HCT116 (cell line): ENCODE measurements at regions of chr3 and their contacts with region 1.

Region 1: DNA sequence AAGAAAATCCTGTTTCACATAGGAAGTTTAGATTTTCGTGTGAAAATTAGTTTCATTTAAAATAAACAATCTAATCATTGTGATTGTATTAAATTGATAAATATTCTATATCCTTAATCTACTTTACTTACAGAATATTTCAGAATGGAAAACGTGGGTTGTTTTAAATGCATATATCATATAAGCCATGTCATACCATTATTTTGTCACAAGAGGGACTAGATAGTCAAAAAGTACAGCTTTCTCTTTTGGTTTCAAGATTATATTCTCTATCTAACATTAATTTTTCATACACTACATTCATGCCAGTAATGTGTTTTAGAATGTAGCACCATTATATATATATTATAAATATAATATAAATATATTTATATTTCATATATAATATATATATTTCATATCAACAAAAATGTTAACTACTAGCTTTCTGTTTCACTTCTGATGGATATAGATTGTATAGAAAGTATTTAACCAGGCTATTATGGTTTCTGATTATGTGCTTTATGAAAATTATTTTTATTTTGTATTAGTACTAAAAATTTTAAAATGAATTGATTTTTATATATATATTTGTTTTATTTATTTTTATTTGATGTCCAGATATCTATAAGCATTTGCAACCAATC is 45.3 kb downstream of the OSTN start:
- DNase-seq: no peak
- ATAC-seq: no peak
- H3K4me3 ChIP-seq: no peak overlapping the region
- H3K27ac ChIP-seq: no peak overlapping the region
- H3K4me1 ChIP-seq: peaks cover 7 to 20% of the 10 kb centered on the region in 2 experiments
- H3K27me3 ChIP-seq: no peaks in the 10 kb centered on the region
- CTCF ChIP-seq: peak; percentile 25 to 45 (median 26); a peak in 4 of 6 replicates
- POLR2A ChIP-seq: no peak
- RAD21 ChIP-seq: peak; percentile 60

Region 2: DNA sequence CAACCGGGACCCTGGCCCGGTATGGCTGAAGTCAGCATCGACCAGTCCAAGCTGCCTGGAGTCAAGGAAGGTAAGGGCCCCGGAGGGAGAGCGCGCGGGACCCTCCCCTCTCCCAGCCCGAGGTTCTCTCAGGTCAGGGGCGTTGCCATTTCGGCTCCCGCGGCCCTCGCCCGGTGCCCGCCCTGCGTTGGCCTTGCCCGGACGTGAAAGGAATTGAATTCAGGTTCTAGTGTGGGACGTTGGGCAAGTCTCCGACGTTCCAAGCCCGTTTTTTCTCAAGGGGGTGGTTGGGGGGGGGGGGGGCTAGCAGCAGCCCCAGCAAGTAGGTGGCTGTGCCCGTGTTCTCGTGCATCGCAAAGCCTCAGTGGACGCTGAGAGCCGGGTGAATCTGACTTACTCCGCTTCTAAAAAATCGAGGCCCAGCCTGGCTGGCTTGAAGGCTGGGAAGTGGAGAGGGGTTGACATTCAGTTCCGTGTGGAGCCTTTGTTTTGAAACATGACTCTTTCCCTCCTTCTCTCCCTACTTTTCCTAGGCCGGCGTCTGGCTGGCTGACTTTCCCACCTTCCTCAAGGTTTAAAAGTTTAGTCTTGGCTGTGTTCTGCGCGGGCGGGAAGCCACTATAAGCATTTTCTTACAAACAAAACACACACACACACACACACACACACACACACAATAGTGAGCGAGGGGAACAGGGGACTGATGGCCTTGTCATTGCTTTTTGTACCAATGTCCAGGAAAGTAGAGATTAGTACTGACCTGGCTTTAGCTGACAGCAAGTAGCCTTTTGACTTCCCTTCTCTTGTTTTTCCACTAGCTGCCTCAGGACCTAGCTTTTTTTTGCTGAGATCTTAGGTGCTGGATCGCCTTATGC is 85.5 kb after region 1 on chr3 and contains the start of gene UTS2B:
- CTCF ChIA-PET with region 1: no interaction called
- POLR2A ChIA-PET with region 1: no interaction called
- RAD21 ChIA-PET with region 1: no interaction called
- intact Hi-C with region 1: loop called (anchors 5 kb)
- DNase-seq: no peak
- ATAC-seq: peak; percentile 53
- H3K4me3 ChIP-seq: peak within 1 kb of the TSS; percentile 75 to 82
- H3K27ac ChIP-seq: peak within 1 kb of the TSS; percentile 90
- H3K4me1 ChIP-seq: peaks cover 45 to 66% of the 10 kb centered on the region in 2 experiments
- H3K27me3 ChIP-seq: no peaks in the 10 kb centered on the region
- CTCF ChIP-seq: no peak
- POLR2A ChIP-seq: no peak
- RAD21 ChIP-seq: no peak
- total RNA-seq, gene UTS2B: 0.59 TPM

Region 3: GRCh38 chr3:191388823-191389222 is 144.5 kb after region 1 on chr3:
- CTCF ChIA-PET with region 1: no interaction called
- POLR2A ChIA-PET with region 1: no interaction called
- RAD21 ChIA-PET with region 1: no interaction called
- intact Hi-C with region 1: loop called (anchors 5 kb)
- DNase-seq: no peak
- ATAC-seq: no peak
- H3K4me3 ChIP-seq: no peak overlapping the region
- H3K27ac ChIP-seq: no peak overlapping the region
- H3K4me1 ChIP-seq: no peaks in the 10 kb centered on the region
- H3K27me3 ChIP-seq: no peaks in the 10 kb centered on the region
- CTCF ChIP-seq: peak in 1 of 3 experiments; percentile 26; a peak in 2 of 6 replicates
- POLR2A ChIP-seq: no peak
- RAD21 ChIP-seq: peak; percentile 37